Ascending aorta (tissue), 2 donors: ENCODE measurements at regions of chr2 and their contacts with region 1.

Region 1: DNA sequence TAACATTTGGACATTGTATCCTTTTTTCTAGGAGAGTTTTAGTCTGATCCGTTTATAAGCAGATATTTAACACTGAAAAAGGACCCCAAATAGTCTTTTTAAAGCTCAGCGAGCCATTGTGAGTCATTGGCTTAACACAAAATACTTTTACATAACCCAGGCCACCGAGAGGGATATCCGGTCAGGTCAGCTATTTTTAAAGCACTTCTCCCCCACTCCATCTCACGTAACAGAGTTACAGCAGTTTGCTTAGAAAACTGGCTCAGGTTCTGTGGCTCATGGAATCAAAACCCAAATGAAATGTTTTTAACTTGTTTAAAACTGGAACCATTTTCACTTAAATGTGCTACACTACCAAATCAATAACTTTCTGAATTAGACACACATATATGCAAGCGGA is 23.9 kb downstream of the COL4A3 start:
- DNase-seq: peak in 1 of 2 donors; percentile 69
- H3K4me3 ChIP-seq: peak overlapping the region in 1 of 2 donors; percentile 26
- H3K27ac ChIP-seq: peak overlapping the region; percentile 78 to 85
- H3K4me1 ChIP-seq: peaks cover 9 to 17% of the 10 kb centered on the region in 2 donors
- H3K27me3 ChIP-seq: no peaks in the 10 kb centered on the region
- CTCF ChIP-seq: no peak

Region 2: GRCh38 chr2:227163998-227164762 is 24.1 kb before region 1 on chr2 and contains the starts of genes COL4A3 and COL4A4:
- intact Hi-C with region 1: loop called (anchors 2 kb)
- DNase-seq: peak in 1 of 2 donors; percentile 77
- H3K4me3 ChIP-seq: peak within 1 kb of the TSS; percentile 82 to 88
- H3K27ac ChIP-seq: peak within 1 kb of the TSS; percentile 70 to 79
- H3K4me1 ChIP-seq: no peaks in the 10 kb centered on the region
- H3K27me3 ChIP-seq: no peaks in the 10 kb centered on the region
- CTCF ChIP-seq: no peak
- total RNA-seq, gene COL4A3: 1.1 TPM
- total RNA-seq, gene COL4A4: 20.5 TPM

Region 3: GRCh38 chr2:227228061-227228667 is 39.9 kb after region 1 on chr2:
- intact Hi-C with region 1: loop called (anchors 5 kb)
- DNase-seq: no peak
- H3K4me3 ChIP-seq: peak overlapping the region in 1 of 2 donors; percentile 40
- H3K27ac ChIP-seq: peak overlapping the region; percentile 17 to 46
- H3K4me1 ChIP-seq: peaks cover 0 to 3% of the 10 kb centered on the region in 2 donors
- H3K27me3 ChIP-seq: no peaks in the 10 kb centered on the region
- CTCF ChIP-seq: no peak